Posterior cingulate gyrus (tissue), 11 donors: ENCODE measurements at regions of chr13 and their contacts with region 1.

Region 1: DNA sequence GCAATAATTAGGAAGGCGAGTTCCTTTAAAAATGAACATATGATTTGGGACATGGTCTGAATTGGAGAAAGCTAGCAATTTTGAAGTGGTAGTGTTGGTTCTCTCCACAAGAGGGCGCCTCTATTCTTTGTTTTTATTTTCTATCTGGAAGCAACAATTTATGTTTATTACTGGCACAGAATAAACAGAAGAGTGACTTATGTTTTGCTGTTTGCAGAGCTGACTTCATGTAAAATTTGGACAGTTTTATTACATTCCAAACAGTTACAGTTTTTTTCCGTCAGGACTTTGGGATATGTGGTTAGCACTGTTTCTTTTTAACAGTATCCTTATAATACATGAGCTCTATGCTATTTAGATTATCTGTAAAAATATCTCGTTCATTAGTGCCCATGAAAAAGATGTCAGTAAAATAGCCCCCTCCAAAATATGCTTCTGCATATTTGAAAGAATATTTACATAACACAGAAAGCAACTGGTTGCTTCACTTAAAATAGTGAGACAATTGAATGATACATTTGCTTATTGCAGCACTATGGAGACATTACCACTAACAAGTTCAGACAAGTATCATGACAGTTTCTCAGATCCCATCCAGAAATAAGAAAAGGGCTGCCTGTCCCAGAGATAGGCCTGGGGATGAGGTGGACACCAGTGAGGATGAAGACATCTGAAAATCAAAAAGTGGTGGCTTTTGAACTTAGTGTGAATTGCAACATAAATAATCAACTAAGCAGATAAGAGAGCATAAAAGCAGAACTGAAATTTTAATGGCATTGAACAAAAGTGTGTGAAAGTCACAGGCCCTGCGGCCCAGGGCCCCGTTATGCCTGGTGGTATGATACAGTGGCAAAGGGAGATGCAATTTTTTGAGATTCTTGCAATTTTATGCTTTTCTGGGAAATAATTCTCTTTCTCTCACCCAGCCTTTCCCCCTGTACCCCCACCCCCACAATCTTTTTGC is 32.3 kb upstream of the FGF9 start:
- DNase-seq: no peak

Region 2: GRCh38 chr13:21546372-21546771 is 92.2 kb before region 1 on chr13:
- intact Hi-C with region 1: no loop called
- DNase-seq: peak in 1 of 10 donors; percentile 3

Region 3: GRCh38 chr13:22278336-22278929 is 639.8 kb after region 1 on chr13:
- intact Hi-C with region 1: loop called (anchors 10 kb)
- DNase-seq: peak in 6 of 10 donors; percentile 14 to 85 (median 38)

Region 4: GRCh38 chr13:22761709-22762108 is 1123.1 kb after region 1 on chr13:
- intact Hi-C with region 1: loop called (anchors 5 kb)
- DNase-seq: no peak